ENCODE measurements at regions of chr11 and their contacts with region 1.

Region 1: GRCh38 chr11:128695539-128696221 is 1.8 kb downstream of the FLI1 start:
- DNase-seq: peak in 7 of 9 donors; percentile 39 to 63 (median 52)
- ATAC-seq: peak; percentile 75
- H3K4me3 ChIP-seq: peak overlapping the region; percentile 82
- H3K4me3 Mint-ChIP-seq: peak overlapping the region; percentile 89 to 99 (median 96)
- H3K27ac ChIP-seq: peak overlapping the region; percentile 86
- H3K27ac Mint-ChIP-seq: peak overlapping the region; percentile 72 to 96 (median 94)
- H3K4me1 ChIP-seq: peaks cover 45 to 53% of the 10 kb centered on the region in 2 donors
- H3K4me1 Mint-ChIP-seq: peaks cover 53 to 75% (median 67%) of the 10 kb centered on the region in 7 donors
- H3K27me3 ChIP-seq: no peaks in the 10 kb centered on the region
- H3K27me3 Mint-ChIP-seq: peaks cover 0 to 22% (median 0%) of the 10 kb centered on the region in 5 donors

Region 2: GRCh38 chr11:128506999-128507611 is 188.6 kb before region 1 on chr11:
- CTCF ChIA-PET with region 1: no interaction called
- POLR2A ChIA-PET with region 1: interaction called, 4 read pairs
- intact Hi-C with region 1: loop called (anchors 2 to 5 kb)
- DNase-seq: peak in 1 of 9 donors; percentile 60
- ATAC-seq: no peak
- H3K4me3 ChIP-seq: peak overlapping the region; percentile 96
- H3K4me3 Mint-ChIP-seq: peak overlapping the region; percentile 85 to 100 (median 98)
- H3K27ac ChIP-seq: peak overlapping the region; percentile 97
- H3K27ac Mint-ChIP-seq: peak overlapping the region; percentile 87 to 99 (median 97)
- H3K4me1 ChIP-seq: peaks cover 89 to 91% of the 10 kb centered on the region in 2 donors
- H3K4me1 Mint-ChIP-seq: peaks cover 70 to 98% (median 92%) of the 10 kb centered on the region in 7 donors
- H3K27me3 ChIP-seq: no peaks in the 10 kb centered on the region
- H3K27me3 Mint-ChIP-seq: no peaks in the 10 kb centered on the region

Region 3: DNA sequence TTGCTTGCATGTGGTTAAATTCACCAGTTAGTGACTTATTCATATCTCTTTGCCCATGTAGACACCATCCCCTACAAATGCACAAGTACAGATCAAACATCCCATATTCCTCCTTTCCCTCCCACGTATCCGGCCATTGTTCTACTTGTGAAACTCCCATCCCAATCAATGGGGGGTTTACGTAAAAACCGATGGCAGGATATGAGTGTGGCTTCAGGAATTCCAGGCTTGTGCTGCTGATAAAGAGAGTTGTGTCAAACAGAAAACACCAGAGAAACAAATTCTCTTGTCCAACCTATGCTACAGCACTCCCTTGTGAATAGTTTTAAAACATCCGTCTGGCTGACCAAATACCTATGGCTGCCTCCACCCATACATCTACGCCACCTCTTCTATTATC is 13.7 kb after region 1 on chr11:
- CTCF ChIA-PET with region 1: no interaction called
- POLR2A ChIA-PET with region 1: interaction called, 12 read pairs
- intact Hi-C with region 1: loop called in 1 of 2 experiments (anchors 1 kb)
- DNase-seq: no peak
- ATAC-seq: no peak
- H3K4me3 ChIP-seq: no peak overlapping the region
- H3K4me3 Mint-ChIP-seq: peak overlapping the region in 6 of 10 donors; percentile 0 to 47 (median 26)
- H3K27ac ChIP-seq: no peak overlapping the region
- H3K27ac Mint-ChIP-seq: peak overlapping the region in 7 of 9 donors; percentile 33 to 80 (median 63)
- H3K4me1 ChIP-seq: peaks cover 76 to 77% of the 10 kb centered on the region in 2 donors
- H3K4me1 Mint-ChIP-seq: peaks cover 75 to 100% (median 98%) of the 10 kb centered on the region in 7 donors
- H3K27me3 ChIP-seq: no peaks in the 10 kb centered on the region
- H3K27me3 Mint-ChIP-seq: no peaks in the 10 kb centered on the region

Region 4: DNA sequence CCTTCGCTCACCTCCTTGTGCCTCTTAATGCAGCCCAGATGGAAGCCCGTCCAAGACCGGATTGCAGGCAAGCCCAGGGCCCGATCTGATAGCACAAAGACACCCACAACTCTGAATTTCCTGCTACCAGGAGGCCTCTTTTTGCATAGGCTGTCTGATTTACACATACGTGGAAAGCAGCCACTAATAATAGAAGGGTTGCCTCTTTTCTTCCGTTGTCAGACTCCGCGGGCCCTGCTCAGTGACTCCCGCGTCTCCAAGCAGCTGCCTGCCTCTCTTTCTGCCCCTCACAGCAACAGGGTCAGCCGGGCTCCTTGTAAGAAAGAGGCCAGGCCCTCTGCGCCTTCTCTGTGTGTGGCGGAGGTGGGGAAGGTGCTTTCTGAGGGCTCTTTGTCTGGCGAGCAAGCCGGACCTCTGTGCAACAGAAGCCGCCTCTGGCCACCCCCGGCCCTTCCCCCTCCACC is 24.9 kb after region 1 on chr11:
- CTCF ChIA-PET with region 1: interaction called, 7 read pairs
- POLR2A ChIA-PET with region 1: interaction called, 56 read pairs
- intact Hi-C with region 1: loop called (anchors 1 kb)
- DNase-seq: peak in 7 of 9 donors; percentile 53 to 68 (median 59)
- ATAC-seq: peak; percentile 51
- H3K4me3 ChIP-seq: peak overlapping the region; percentile 41
- H3K4me3 Mint-ChIP-seq: peak overlapping the region; percentile 78 to 92 (median 85)
- H3K27ac ChIP-seq: peak overlapping the region; percentile 73
- H3K27ac Mint-ChIP-seq: peak overlapping the region; percentile 86 to 99 (median 96)
- H3K4me1 ChIP-seq: peaks cover 99 to 100% of the 10 kb centered on the region in 2 donors
- H3K4me1 Mint-ChIP-seq: peaks cover 95 to 100% (median 100%) of the 10 kb centered on the region in 7 donors
- H3K27me3 ChIP-seq: no peaks in the 10 kb centered on the region
- H3K27me3 Mint-ChIP-seq: no peaks in the 10 kb centered on the region

Region 5: GRCh38 chr11:128733440-128734102 is 37.9 kb after region 1 on chr11:
- CTCF ChIA-PET with region 1: interaction called, 6 read pairs
- POLR2A ChIA-PET with region 1: interaction called, 56 read pairs
- intact Hi-C with region 1: loop called in 1 of 2 experiments (anchors 1 kb)
- DNase-seq: peak in 3 of 9 donors; percentile 27 to 43 (median 37)
- ATAC-seq: peak; percentile 39
- H3K4me3 ChIP-seq: peak overlapping the region; percentile 20
- H3K4me3 Mint-ChIP-seq: peak overlapping the region; percentile 79 to 92 (median 85)
- H3K27ac ChIP-seq: peak overlapping the region; percentile 41
- H3K27ac Mint-ChIP-seq: peak overlapping the region; percentile 85 to 98 (median 90)
- H3K4me1 ChIP-seq: peaks cover 96 to 100% of the 10 kb centered on the region in 2 donors
- H3K4me1 Mint-ChIP-seq: peaks cover 81 to 100% (median 98%) of the 10 kb centered on the region in 7 donors
- H3K27me3 ChIP-seq: no peaks in the 10 kb centered on the region
- H3K27me3 Mint-ChIP-seq: no peaks in the 10 kb centered on the region

Region 6: DNA sequence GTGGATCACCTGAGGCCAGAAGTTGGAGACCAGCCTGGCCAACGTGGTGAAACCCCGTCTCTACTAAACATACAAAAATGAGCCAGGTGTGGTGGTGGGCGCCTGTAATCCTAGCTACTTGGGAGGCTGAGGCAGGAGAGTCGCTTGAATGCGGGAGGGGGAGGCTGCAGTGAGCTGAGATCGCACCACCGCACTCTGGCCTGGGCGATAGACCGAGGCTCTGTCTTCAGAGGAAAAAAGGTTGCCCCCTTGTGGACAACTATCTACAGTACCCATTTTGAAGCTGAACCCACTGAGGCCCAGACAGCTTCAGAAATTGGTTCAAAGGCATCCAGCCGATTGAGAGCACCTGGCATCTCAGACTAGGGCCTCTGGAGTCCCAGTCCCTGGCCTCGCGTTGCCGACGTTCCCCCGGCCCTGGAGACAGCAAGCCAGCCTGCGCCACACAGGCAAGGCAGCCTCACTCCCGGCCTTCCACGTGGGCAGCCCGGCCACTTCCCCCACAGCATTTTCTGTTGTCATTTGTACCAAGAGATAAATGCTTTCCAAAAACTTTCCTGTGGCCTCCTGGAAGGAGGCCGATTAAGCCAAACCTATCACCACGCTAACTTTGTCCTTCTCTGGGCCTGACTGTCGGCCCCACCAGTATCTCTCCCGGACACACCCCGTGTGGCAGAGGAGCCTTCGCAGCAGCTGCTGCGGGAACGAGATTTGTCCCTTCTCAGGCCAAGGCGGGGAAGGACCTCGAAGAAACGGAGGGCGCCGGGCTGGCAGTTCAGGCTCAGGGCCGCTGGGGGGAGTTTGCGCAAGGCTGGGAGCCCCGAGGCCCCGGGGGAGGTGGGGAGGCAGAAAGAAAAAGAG is 81.0 kb after region 1 on chr11:
- CTCF ChIA-PET with region 1: no interaction called
- POLR2A ChIA-PET with region 1: interaction called, 5 read pairs
- intact Hi-C with region 1: loop called in 1 of 2 experiments (anchors 1 kb)
- DNase-seq: peak in 7 of 9 donors; percentile 12 to 44 (median 38)
- ATAC-seq: peak; percentile 80
- H3K4me3 ChIP-seq: no peak overlapping the region
- H3K4me3 Mint-ChIP-seq: no peak overlapping the region
- H3K27ac ChIP-seq: no peak overlapping the region
- H3K27ac Mint-ChIP-seq: peak overlapping the region in 6 of 9 donors; percentile 34 to 65 (median 58)
- H3K4me1 ChIP-seq: peaks cover 21 to 34% of the 10 kb centered on the region in 2 donors
- H3K4me1 Mint-ChIP-seq: peaks cover 46 to 89% (median 66%) of the 10 kb centered on the region in 7 donors
- H3K27me3 ChIP-seq: no peaks in the 10 kb centered on the region
- H3K27me3 Mint-ChIP-seq: no peaks in the 10 kb centered on the region

Region 7: GRCh38 chr11:128928400-128928799 is 232.7 kb after region 1 on chr11:
- CTCF ChIA-PET with region 1: no interaction called
- POLR2A ChIA-PET with region 1: no interaction called
- intact Hi-C with region 1: no loop called
- DNase-seq: peak in 1 of 9 donors; percentile 16
- ATAC-seq: peak; percentile 52
- H3K4me3 ChIP-seq: peak overlapping the region; percentile 24
- H3K4me3 Mint-ChIP-seq: peak overlapping the region; percentile 11 to 56 (median 26)
- H3K27ac ChIP-seq: no peak overlapping the region
- H3K27ac Mint-ChIP-seq: peak overlapping the region in 2 of 9 donors; percentile 1 to 34
- H3K4me1 ChIP-seq: peaks cover 0 to 2% of the 10 kb centered on the region in 2 donors
- H3K4me1 Mint-ChIP-seq: peaks cover 10 to 14% (median 11%) of the 10 kb centered on the region in 7 donors
- H3K27me3 ChIP-seq: no peaks in the 10 kb centered on the region
- H3K27me3 Mint-ChIP-seq: peaks cover 0 to 7% (median 0%) of the 10 kb centered on the region in 5 donors

Measured in naive thymus-derived CD4-positive, alpha-beta T cell (primary cell).